Naive thymus-derived CD4-positive, alpha-beta T cell (primary cell): ENCODE measurements at regions of chr22 and their contacts with region 1.

Region 1: DNA sequence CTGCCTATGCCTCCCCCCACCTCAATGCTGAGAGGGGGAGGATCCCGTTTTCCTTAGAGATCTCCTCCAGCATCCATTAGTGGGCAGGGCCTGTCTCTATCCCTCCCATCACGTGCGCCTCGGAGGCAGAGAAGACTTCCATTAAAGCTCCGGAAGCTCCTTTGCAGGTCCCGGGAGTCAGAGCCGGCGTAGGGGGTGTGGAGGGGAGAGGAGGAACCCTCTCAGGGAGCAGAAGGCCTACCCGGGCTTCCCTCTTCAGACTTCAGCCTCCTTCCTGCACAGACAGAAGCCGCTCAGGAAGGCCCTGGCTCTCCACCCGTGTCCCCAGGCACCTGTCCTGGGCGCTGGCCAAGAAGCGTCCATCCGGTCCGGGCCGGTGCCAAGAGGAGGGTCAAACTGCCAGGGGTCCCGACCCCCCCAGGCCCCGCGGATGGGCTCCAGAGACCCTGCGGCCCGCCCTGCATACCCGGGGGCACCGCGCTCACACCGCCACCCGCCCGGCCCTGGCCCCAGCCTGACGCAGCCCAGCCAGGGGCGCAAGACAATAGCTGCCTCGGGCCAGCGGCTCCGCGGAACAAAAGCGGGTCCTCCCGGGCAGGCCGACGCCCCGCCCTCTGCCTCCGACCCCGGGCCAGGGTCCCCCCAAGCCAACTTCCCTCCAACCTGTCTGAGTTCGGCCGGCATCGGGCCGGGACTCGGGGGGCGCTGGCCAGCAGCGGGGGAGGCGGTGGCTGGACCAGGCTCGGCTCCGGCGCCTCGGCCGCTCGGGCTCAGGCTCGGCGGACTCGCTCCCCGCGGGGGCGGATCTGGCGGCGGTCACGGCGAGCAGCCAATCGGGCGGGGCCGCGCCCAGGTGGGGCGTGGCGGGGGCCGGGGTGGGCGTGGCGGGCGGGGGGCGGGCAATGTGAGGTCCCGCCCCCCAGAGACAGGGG is 29.9 kb downstream of the ARVCF start:
- DNase-seq: peak; percentile 26 to 83 (median 47)
- ATAC-seq: peak; percentile 95
- H3K4me3 ChIP-seq: peak overlapping the region; percentile 46
- H3K4me3 Mint-ChIP-seq: peak overlapping the region; percentile 47 to 82 (median 68)
- H3K27ac ChIP-seq: peak overlapping the region; percentile 51
- H3K27ac Mint-ChIP-seq: no peak overlapping the region
- H3K4me1 ChIP-seq: no peaks in the 10 kb centered on the region
- H3K4me1 Mint-ChIP-seq: peaks cover 0 to 3% (median 2%) of the 10 kb centered on the region in 7 donors
- H3K27me3 ChIP-seq: no peaks in the 10 kb centered on the region
- H3K27me3 Mint-ChIP-seq: peaks cover 0 to 7% (median 0%) of the 10 kb centered on the region in 5 donors

Region 2: GRCh38 chr22:20090348-20091240 is 103.9 kb after region 1 on chr22:
- CTCF ChIA-PET with region 1: no interaction called
- POLR2A ChIA-PET with region 1: no interaction called
- intact Hi-C with region 1: no loop called
- DNase-seq: no peak
- ATAC-seq: no peak
- H3K4me3 ChIP-seq: no peak overlapping the region
- H3K4me3 Mint-ChIP-seq: no peak overlapping the region
- H3K27ac ChIP-seq: no peak overlapping the region
- H3K27ac Mint-ChIP-seq: peak overlapping the region in 1 of 9 donors; percentile 75
- H3K4me1 ChIP-seq: peaks cover 0 to 65% of the 10 kb centered on the region in 2 donors
- H3K4me1 Mint-ChIP-seq: peaks cover 0 to 23% (median 8%) of the 10 kb centered on the region in 7 donors
- H3K27me3 ChIP-seq: no peaks in the 10 kb centered on the region
- H3K27me3 Mint-ChIP-seq: no peaks in the 10 kb centered on the region

Region 3: DNA sequence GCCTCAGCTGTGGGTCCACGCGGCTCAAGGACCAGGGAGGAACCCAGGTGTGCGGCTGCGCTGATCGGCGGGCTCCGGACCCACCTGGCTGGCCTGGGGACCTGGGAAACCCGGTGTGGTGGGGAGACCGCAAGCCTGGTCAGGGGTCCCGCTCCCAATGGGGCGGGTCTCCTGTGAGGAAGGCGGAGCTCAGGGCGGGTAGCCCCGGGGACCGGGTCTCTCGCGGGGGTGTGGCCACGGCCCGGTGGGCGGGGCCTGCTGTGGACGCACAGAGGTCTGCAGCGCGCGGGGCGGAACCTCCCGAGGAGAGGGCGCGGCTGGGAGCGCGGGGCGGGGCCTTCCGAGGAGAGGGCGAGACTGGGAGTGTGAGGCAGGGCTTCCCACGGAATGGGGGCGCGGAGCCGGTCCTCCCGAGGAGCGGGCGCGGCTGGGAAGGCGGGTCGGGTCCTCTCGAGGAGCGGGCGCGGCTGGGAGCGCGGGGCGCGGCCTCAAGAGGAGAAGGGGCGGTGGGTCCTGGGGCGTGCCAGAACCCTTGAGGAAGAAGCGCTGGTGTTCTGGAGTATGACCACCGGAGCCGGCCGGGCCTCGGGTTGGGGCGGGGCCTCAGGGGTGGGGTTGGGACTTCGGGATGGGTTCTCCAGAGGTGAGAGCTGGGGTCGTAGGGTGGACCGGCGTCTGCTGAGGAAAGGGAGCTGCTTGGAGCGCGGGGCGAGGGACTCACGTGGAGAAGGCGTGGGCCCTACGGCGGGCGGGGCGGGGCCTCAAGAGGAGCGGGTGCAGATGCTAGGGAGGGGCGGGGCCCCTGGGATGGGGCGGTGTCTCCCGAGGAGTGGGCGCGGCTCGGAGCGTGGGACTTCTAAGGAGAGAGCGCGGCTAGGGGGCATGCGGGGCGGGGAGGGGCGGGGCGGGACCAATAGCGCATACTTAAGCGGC is 312.4 kb after region 1 on chr22:
- CTCF ChIA-PET with region 1: no interaction called
- POLR2A ChIA-PET with region 1: no interaction called
- intact Hi-C with region 1: loop called in 1 of 2 experiments (anchors 10 kb)
- DNase-seq: peak; percentile 80 to 93 (median 92)
- ATAC-seq: peak; percentile 96
- H3K4me3 ChIP-seq: peak overlapping the region; percentile 52
- H3K4me3 Mint-ChIP-seq: peak overlapping the region; percentile 72 to 89 (median 82)
- H3K27ac ChIP-seq: peak overlapping the region; percentile 60
- H3K27ac Mint-ChIP-seq: peak overlapping the region in 6 of 9 donors; percentile 36 to 79 (median 62)
- H3K4me1 ChIP-seq: peaks cover 0 to 3% of the 10 kb centered on the region in 2 donors
- H3K4me1 Mint-ChIP-seq: peaks cover 4 to 11% (median 9%) of the 10 kb centered on the region in 7 donors
- H3K27me3 ChIP-seq: no peaks in the 10 kb centered on the region
- H3K27me3 Mint-ChIP-seq: peaks cover 0 to 27% (median 4%) of the 10 kb centered on the region in 5 donors

Region 4: DNA sequence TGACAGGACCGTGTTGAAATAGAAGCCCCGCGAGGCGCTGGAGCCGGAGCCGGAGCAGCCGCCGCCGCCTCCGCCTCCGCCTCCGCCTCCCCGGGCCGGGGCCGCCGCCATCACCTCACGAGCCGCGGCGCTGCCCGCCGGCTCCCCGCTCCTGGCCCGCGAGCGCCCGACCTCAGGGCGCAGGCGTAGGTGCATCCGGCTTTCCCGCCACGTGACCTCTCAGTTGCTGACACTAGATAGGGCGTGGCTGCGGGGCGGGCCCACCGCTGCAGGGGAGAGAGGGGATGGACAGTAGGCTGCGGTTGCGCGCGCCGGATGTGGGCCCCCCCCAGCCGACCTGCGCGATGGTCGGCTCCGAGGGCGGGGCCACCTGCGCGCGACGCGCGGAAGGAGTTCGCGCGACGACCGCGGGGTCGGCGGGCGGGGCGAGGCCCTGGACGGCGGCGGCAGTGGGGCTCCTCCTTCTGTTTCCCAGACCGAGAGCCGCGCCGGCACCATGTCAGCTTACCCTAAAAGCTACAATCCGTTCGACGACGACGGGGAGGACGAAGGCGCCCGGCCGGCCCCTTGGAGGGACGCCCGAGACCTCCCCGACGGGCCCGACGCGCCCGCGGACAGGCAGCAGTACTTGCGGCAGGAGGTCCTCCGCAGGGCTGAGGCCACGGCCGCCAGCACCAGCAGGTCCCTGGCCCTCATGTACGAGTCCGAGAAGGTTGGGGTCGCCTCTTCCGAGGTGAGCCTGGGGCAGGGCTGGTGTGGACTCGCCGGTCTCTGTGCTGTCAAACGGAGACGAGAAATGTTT is 872.1 kb after region 1 on chr22 and contains the starts of genes PI4KA and SNAP29:
- CTCF ChIA-PET with region 1: no interaction called
- POLR2A ChIA-PET with region 1: no interaction called
- intact Hi-C with region 1: no loop called
- DNase-seq: peak; percentile 92 to 98 (median 96)
- ATAC-seq: peak; percentile 97
- H3K4me3 ChIP-seq: peak within 1 kb of the TSS; percentile 78
- H3K4me3 Mint-ChIP-seq: peak within 1 kb of the TSS; percentile 87 to 95 (median 92)
- H3K27ac ChIP-seq: peak within 1 kb of the TSS; percentile 87
- H3K27ac Mint-ChIP-seq: peak within 1 kb of the TSS; percentile 60 to 92 (median 88)
- H3K4me1 ChIP-seq: peaks cover 17 to 20% of the 10 kb centered on the region in 2 donors
- H3K4me1 Mint-ChIP-seq: peaks cover 38 to 76% (median 58%) of the 10 kb centered on the region in 7 donors
- H3K27me3 ChIP-seq: no peaks in the 10 kb centered on the region
- H3K27me3 Mint-ChIP-seq: no peaks in the 10 kb centered on the region
- total RNA-seq, gene PI4KA: 120 to 181 (median 168) TPM
- total RNA-seq, gene SNAP29: 15.2 to 32.8 (median 25.4) TPM